Uterus (tissue), 4 donors: ENCODE measurements at regions of chr16 and their contacts with region 1.

Region 1: GRCh38 chr16:339680-340079 is 12.8 kb downstream of the AXIN1 start:
- DNase-seq: no peak
- H3K4me3 ChIP-seq: no peak overlapping the region
- H3K27ac ChIP-seq: no peak overlapping the region
- H3K4me1 ChIP-seq: no peaks in the 10 kb centered on the region
- H3K27me3 ChIP-seq: no peaks in the 10 kb centered on the region
- CTCF ChIP-seq: no peak
- POLR2A ChIP-seq: no peak

Region 2: DNA sequence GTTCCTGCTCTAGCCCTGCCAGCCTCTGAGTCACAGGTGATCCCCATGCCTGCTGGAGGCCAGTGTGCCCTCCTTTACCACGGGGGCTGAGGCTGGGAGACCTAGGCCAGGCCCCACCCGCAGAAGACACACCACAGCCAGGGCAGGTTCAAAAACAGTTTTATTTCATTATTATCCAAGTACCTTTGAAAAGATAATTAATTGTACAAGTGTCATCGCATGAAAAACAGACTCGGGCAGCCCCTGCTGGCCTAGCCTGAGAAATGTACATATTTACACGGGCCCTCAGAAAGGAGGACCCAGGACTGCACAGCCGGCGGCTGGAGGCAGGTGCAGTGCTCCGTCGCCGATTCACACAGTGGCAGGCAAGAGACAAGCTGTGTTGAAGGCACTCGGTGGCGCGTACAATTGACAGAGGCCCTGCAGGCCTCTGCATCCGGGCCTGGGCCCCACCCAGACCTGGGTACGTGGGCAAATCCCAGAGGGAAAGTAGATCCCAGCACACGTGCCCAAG is 52.3 kb before region 1 on chr16:
- intact Hi-C with region 1: loop called (anchors 10 kb)
- DNase-seq: no peak
- H3K4me3 ChIP-seq: no peak overlapping the region
- H3K27ac ChIP-seq: no peak overlapping the region
- H3K4me1 ChIP-seq: no peaks in the 10 kb centered on the region
- H3K27me3 ChIP-seq: no peaks in the 10 kb centered on the region
- CTCF ChIP-seq: no peak
- POLR2A ChIP-seq: no peak

Region 3: DNA sequence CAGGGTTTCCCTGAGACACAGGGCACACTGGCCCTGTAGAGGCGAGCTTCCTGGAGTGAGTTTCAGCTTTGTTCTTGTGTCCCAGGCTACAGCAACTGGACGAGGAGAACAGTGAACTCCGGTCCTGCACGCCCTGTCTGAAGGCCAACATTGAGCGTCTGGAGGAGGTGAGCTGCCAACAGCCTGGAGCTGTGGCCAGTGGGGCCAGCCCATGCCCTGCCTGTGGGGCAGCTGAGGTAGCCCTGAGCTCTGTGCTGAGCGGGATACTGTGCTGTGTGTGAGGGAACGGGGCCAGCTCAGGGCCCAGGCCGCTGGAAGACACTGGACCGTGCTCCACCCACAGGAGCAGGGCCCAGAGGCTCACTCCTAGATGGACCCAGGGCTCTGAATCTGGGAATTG is 179.2 kb after region 1 on chr16:
- intact Hi-C with region 1: no loop called
- DNase-seq: no peak
- H3K4me3 ChIP-seq: no peak overlapping the region
- H3K27ac ChIP-seq: no peak overlapping the region
- H3K4me1 ChIP-seq: no peaks in the 10 kb centered on the region
- H3K27me3 ChIP-seq: no peaks in the 10 kb centered on the region
- CTCF ChIP-seq: no peak
- POLR2A ChIP-seq: no peak